Ovary (tissue), 10 donors: ENCODE measurements at regions of chr22 and their contacts with region 1.

Region 1: DNA sequence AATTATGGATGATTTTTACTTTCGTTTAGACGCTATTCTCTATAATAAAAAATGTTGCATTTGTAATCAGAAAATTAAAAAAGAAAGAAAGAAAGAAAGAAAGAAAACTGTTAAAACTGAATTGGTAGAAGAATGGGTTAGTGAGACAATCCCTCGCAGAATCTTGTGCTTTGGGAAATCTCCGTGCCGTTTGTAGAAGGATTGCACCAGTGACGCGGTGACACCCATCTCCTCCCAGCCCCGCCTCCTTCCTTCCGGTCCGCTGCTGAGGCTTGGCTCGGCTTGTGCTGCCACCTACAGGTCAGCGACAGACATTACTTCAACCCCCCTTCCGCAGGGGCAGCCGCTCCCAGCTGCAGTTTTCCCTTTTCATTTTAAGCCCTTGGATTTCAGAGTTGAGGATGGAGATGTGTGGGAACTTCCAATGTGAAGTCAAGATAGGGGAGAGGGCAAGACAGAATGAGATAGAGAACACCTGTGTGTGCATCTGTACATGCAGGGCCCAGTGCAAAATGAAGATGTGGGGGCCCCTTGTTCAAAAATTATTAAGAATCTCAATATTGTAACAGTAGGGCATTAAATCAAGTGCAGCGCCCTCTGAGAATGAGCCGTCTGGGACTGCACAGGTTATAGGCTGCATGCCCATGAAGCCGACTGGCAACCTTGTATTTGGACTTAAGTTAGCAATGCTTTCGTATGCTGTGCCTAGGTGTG is 41.1 kb downstream of the TST start:
- DNase-seq: peak; percentile 87 to 92 (median 90)
- H3K4me3 ChIP-seq: peak overlapping the region; percentile 35
- H3K27ac ChIP-seq: no peak overlapping the region
- H3K4me1 ChIP-seq: no peaks in the 10 kb centered on the region
- H3K27me3 ChIP-seq: no peaks in the 10 kb centered on the region
- CTCF ChIP-seq: peak; percentile 86 to 97 (median 87)
- EP300 ChIP-seq: no peak
- POLR2A ChIP-seq: no peak

Region 2: GRCh38 chr22:36781656-36782627 is 196.2 kb before region 1 on chr22:
- intact Hi-C with region 1: loop called (anchors 5 to 10 kb)
- DNase-seq: peak; percentile 50 to 84 (median 73)
- H3K4me3 ChIP-seq: no peak overlapping the region
- H3K27ac ChIP-seq: no peak overlapping the region
- H3K4me1 ChIP-seq: peaks cover under 1% of the 10 kb centered on the region
- H3K27me3 ChIP-seq: no peaks in the 10 kb centered on the region
- CTCF ChIP-seq: peak; percentile 63 to 78 (median 69)
- EP300 ChIP-seq: no peak
- POLR2A ChIP-seq: no peak

Region 3: GRCh38 chr22:36790648-36791047 is 187.5 kb before region 1 on chr22:
- intact Hi-C with region 1: loop called in 2 of 4 experiments (anchors 5 to 10 kb)
- DNase-seq: no peak
- H3K4me3 ChIP-seq: no peak overlapping the region
- H3K27ac ChIP-seq: no peak overlapping the region
- H3K4me1 ChIP-seq: no peaks in the 10 kb centered on the region
- H3K27me3 ChIP-seq: no peaks in the 10 kb centered on the region
- CTCF ChIP-seq: no peak
- EP300 ChIP-seq: no peak
- POLR2A ChIP-seq: no peak

Region 4: GRCh38 chr22:36860821-36861659 is 117.1 kb before region 1 on chr22 and contains the start of gene NCF4:
- intact Hi-C with region 1: loop called in 1 of 4 experiments (anchors 10 kb)
- DNase-seq: no peak
- H3K4me3 ChIP-seq: no peak within 1 kb of the TSS
- H3K27ac ChIP-seq: no peak within 1 kb of the TSS
- H3K4me1 ChIP-seq: peaks cover 1% of the 10 kb centered on the region
- H3K27me3 ChIP-seq: no peaks in the 10 kb centered on the region
- CTCF ChIP-seq: no peak
- EP300 ChIP-seq: no peak
- POLR2A ChIP-seq: no peak
- total RNA-seq, gene NCF4: 2.2 to 6.7 (median 4.8) TPM

Region 5: GRCh38 chr22:36940676-36941075 is 37.4 kb before region 1 on chr22:
- intact Hi-C with region 1: no loop called
- DNase-seq: no peak
- H3K4me3 ChIP-seq: no peak overlapping the region
- H3K27ac ChIP-seq: no peak overlapping the region
- H3K4me1 ChIP-seq: no peaks in the 10 kb centered on the region
- H3K27me3 ChIP-seq: no peaks in the 10 kb centered on the region
- CTCF ChIP-seq: no peak
- EP300 ChIP-seq: no peak
- POLR2A ChIP-seq: no peak